ENCODE measurements at regions of chr4 and their contacts with region 1.

Region 1: DNA sequence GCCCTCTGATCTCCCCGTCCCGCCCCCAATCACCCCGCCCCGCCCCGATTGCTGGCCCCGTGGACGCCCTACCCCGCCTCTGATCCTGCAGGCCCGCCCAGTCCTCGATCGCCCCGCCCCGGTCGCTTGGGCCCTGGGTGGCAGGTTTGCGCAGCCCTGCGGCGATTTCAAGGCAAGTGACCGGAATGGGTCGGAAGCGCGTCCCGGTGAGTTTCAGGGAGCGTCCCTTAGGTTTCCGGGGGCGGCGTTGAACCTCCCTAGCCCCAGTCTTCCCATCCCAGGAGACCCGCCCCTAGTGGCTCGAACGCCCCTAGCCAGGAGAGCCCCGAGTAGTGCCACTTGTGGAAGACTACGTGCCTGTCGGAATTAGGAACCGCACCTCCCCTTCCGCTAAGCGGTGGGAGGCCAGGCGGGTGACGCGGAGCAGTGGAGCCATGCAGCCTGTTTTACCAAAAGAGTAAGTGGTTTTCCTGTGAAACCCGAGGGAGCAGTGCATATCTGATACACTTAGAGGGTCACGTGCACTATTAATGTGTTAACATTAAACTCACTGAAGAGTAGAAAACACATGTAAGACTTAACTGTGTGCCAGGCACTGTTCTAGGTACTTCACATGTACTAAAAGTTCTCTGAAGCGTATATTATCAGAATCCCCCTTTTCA is 354 bp upstream of the TEC start:
- DNase-seq: peak; percentile 88
- ATAC-seq: peak; percentile 90
- H3K4me3 Mint-ChIP-seq: peak overlapping the region; percentile 96
- H3K27ac Mint-ChIP-seq: peak overlapping the region; percentile 92
- H3K4me1 Mint-ChIP-seq: peaks cover 39% of the 10 kb centered on the region
- H3K27me3 Mint-ChIP-seq: no peaks in the 10 kb centered on the region
- CTCF ChIP-seq: no peak

Region 2: DNA sequence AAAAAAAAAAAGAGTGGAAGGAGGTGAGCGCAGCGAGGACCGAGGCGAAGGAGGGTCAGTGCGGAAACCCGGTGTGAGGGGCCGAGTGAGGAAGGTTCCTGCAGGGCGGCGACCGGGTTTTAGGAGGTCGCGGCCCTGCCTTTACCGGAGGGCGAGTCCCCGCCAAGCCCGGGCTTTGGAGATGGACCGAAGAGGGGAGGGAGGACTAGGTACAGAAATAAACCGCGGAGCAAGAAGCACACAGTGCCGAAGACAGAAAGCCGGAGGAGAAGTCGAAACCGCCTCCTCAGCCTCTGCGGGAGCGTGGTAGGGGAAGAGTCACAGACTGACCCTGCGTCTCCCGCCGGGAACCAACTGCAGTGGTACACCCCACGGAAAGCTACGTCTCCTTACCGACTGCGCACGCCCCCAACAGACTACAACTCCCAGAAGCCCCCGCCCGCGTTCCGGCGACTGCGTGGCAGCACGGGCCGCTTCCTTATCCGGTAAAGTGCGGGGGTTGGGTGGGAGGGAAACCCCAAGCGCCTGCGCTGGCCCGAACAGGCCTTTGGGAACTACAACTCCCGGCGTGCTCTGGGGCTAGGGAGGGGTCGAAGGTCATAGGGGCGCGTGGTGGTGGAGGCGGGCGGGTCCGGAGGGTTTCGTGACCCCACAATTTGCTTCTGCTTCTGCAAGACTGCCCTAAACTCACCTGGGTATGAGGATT is 355.6 kb before region 1 on chr4 and contains the start of gene NFXL1:
- CTCF ChIA-PET with region 1: no interaction called
- POLR2A ChIA-PET with region 1: no interaction called
- intact Hi-C with region 1: loop called (anchors 1 kb)
- DNase-seq: peak; percentile 90
- ATAC-seq: peak; percentile 96
- H3K4me3 Mint-ChIP-seq: peak within 1 kb of the TSS; percentile 98
- H3K27ac Mint-ChIP-seq: peak within 1 kb of the TSS; percentile 92
- H3K4me1 Mint-ChIP-seq: peaks cover 31% of the 10 kb centered on the region
- H3K27me3 Mint-ChIP-seq: no peaks in the 10 kb centered on the region
- CTCF ChIP-seq: no peak
- total RNA-seq, gene NFXL1: 10.0 and 11.1 TPM in 2 replicates

Region 3: DNA sequence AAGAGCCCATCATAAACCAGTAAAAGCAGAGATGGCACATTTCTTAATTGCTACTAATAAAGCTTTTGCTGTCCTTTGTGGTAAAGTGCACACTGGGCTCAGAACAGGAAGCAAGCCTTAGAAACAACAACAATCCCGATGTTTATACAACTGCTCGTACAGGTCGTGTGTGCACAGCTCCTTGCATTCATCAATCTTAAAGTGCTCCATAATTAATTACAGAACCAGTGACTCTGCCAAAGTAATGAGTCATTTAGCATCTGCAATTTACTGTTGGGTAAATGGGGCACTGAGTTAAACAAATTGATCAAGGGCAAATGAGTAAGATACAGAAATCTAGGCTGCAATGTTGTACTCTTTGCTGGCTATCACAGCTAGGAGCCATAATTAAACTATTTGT is 74.6 kb before region 1 on chr4:
- CTCF ChIA-PET with region 1: interaction called, 4 read pairs
- POLR2A ChIA-PET with region 1: interaction called, 3 read pairs
- intact Hi-C with region 1: loop called (anchors 1 kb)
- DNase-seq: no peak
- ATAC-seq: peak; percentile 18
- H3K4me3 Mint-ChIP-seq: peak overlapping the region; percentile 64
- H3K27ac Mint-ChIP-seq: peak overlapping the region; percentile 73
- H3K4me1 Mint-ChIP-seq: peaks cover 70% of the 10 kb centered on the region
- H3K27me3 Mint-ChIP-seq: no peaks in the 10 kb centered on the region
- CTCF ChIP-seq: no peak

Region 4: DNA sequence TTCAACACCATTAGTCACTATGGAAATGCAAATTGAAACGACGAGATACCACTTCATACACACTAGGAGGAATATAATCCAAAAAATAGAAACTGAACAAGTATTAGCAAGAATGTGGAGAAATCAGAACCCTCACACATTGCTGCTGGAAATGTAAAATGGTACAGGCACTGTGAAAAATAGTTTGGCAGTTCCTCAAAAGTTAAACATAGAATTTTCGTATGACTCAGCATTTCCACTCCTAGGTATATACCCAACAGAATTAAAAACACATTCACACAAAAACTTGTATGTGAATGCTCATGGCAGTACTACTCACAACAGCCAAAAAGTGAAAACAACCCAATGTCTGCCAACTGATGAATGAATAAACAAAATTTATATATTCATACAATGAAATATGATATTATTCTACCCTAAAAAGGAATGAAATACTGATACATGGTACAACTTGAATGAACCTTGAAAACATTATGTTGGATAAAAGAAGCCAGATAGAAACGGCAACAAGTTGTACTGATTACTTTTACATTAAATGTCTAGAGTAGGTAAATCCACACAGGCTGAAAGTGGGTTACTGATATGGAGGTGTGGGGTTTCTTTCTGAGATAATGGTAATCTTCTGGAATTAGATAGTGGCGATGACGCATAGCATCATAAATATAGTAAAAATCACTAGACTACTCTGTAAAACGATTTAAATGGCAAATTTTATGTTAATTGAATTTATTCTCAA is 22.7 kb before region 1 on chr4:
- CTCF ChIA-PET with region 1: interaction called, 3 read pairs
- POLR2A ChIA-PET with region 1: interaction called, 3 read pairs
- intact Hi-C with region 1: loop called (anchors 1 kb)
- DNase-seq: no peak
- ATAC-seq: peak; percentile 62
- H3K4me3 Mint-ChIP-seq: no peak overlapping the region
- H3K27ac Mint-ChIP-seq: peak overlapping the region; percentile 7
- H3K4me1 Mint-ChIP-seq: peaks cover 30% of the 10 kb centered on the region
- H3K27me3 Mint-ChIP-seq: no peaks in the 10 kb centered on the region
- CTCF ChIP-seq: no peak

Region 5: DNA sequence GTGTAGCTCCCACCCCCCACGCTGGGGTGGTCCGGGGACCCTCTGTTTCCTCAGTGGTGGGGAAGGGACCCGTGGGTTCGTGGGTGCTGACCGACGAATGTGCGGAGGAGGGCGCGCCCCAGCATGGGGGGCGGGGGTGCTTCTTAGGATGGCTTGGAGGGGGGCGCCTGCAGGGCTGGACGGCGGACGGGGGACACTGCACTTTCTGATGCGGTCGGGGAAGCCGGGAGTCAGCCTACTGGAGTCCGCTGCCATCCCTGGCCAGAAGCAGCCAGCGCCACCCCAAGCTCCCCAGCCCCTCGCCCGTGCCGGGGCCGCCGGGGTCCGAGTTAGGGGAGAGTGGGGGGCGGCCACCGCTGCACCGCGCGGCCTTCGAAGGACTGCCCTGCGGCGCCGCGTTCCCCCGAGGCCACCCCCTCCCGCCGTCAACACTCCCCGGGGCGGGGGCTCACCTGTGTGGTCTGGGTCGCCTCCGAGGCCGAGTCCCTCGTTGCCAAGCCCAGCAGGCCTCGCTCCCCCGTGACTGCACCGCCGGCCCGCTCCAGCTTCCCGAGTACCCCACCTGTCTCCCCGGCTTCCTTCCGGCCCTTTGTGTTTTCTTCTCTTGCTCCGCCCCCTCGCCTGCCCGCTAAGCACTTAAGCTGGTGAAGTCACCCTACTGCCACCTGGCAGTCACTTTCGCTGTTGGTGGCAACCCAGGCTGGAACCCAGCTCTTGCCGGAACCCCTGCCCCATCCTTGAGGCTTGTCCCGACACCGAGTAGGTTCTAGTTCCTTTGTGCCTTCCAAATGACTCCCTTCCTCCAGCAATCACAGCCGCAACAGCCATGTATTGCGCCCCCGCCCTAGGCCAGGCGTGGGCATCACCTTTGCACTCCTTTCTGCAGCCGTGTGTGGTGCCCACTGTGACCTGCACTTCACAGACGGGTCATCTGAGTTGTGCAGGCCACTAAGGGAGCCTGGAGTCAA is 636.5 kb after region 1 on chr4 and contains the start of gene OCIAD2:
- CTCF ChIA-PET with region 1: no interaction called
- POLR2A ChIA-PET with region 1: no interaction called
- intact Hi-C with region 1: loop called (anchors 5 kb)
- DNase-seq: peak; percentile 65
- ATAC-seq: peak; percentile 97
- H3K4me3 Mint-ChIP-seq: peak within 1 kb of the TSS; percentile 97
- H3K27ac Mint-ChIP-seq: peak within 1 kb of the TSS; percentile 86
- H3K4me1 Mint-ChIP-seq: peaks cover 29% of the 10 kb centered on the region
- H3K27me3 Mint-ChIP-seq: no peaks in the 10 kb centered on the region
- CTCF ChIP-seq: no peak
- total RNA-seq, gene OCIAD2: 37.0 and 38.3 TPM in 2 replicates

Measured in activated B cell treated with CpG ODN at 0.5 μM for 24 hours (primary cell).